Breast epithelium (tissue), 4 donors: ENCODE measurements at regions of chr1 and their contacts with region 1.

Region 1: GRCh38 chr1:160925652-160926241 is 28.9 kb downstream of the ITLN2 start:
- DNase-seq: no peak
- H3K4me3 ChIP-seq: no peak overlapping the region
- H3K27ac ChIP-seq: no peak overlapping the region
- H3K4me1 ChIP-seq: no peaks in the 10 kb centered on the region
- H3K27me3 ChIP-seq: no peaks in the 10 kb centered on the region
- CTCF ChIP-seq: no peak
- POLR2A ChIP-seq: no peak

Region 2: GRCh38 chr1:160284782-160285344 is 640.9 kb before region 1 on chr1 and contains the start of gene PEX19:
- intact Hi-C with region 1: no loop called
- DNase-seq: peak; percentile 93 to 95
- H3K4me3 ChIP-seq: peak within 1 kb of the TSS; percentile 75 to 97 (median 91)
- H3K27ac ChIP-seq: peak within 1 kb of the TSS; percentile 82 to 93
- H3K4me1 ChIP-seq: peaks cover 0 to 17% of the 10 kb centered on the region in 2 donors
- H3K27me3 ChIP-seq: no peaks in the 10 kb centered on the region
- CTCF ChIP-seq: no peak
- POLR2A ChIP-seq: peak; percentile 82
- total RNA-seq, gene PEX19: 58.7 to 136 (median 80.1) TPM

Region 3: DNA sequence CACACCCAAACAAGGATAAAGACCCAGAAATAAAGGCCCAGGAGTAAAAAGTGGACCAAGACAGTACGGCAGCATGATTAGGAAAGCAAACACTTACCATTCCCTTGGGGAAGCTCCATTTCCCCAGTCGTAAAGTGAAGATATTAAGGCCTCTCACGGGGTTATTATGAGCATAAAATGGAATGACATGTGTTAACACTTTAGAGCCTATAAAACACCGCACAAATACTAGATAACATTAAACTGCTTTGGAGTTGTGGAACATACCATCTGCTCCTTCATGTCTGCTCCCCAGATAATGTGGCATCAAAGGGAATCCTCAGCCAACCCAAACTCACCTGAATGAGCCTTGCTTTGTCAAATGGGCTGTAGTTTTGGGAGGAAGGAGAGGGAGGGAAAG is 37.8 kb after region 1 on chr1:
- intact Hi-C with region 1: loop called (anchors 2 kb)
- DNase-seq: no peak
- H3K4me3 ChIP-seq: no peak overlapping the region
- H3K27ac ChIP-seq: no peak overlapping the region
- H3K4me1 ChIP-seq: no peaks in the 10 kb centered on the region
- H3K27me3 ChIP-seq: no peaks in the 10 kb centered on the region
- CTCF ChIP-seq: no peak
- POLR2A ChIP-seq: no peak